GM18951 (cell line): ENCODE measurements at regions of chr1 and their contacts with region 1.

Region 1: DNA sequence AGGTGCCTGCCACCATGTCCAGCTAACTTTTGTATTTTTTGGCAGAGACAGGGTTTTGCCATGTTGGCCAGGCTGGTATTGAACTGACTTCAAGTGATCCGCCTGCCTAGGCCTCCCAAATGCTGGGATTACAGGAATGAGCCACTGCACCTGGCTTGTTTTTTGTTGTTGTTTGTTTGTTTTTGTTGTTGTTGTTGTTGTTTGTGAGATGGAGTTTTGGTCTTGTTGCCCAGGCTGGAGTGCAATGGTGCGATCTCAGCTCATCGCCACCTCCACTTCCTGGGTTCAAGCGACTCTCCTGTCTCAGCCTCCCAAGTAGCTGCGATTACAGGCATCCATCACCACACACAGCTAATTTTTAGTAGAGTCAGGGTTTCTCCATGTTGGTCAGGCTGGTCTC is 7.1 kb upstream of the L1TD1 start:
- POLR2A ChIP-seq: no peak

Region 2: DNA sequence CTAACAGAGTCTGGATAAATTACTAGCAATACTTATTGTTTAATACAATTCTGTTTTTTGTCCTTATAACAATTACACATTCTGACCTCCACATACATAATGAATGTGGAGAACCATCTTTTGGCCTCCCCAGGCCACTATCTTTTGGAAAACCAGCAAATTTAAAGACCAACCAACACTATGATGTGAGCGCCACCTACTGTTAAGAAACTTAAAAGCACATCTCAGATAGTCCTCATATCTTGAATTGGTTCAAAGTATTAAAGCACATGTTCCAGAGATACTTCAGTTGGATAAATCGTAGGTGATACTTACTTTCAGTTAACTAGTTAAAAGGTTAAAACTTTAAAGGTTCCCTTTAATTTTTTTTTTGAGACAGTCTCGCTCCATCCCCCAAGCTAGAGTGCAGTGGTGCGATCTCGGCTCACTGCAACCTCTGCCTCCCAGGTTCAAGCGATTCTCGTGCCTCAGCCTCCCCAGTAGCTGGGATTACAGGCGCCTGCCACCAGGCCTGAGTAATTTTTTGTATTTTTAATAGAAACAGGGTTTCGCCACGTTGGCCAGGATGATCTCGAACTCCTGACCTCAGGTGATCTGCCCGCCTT is 220.0 kb after region 1 on chr1:
- in situ Hi-C with region 1: loop called (anchors 5 kb)
- POLR2A ChIP-seq: no peak